Right lobe of liver (tissue), 6 donors: ENCODE measurements at regions of chr6 and their contacts with region 1.

Region 1: GRCh38 chr6:143112084-143112768 is 51.5 kb downstream of the AIG1 start:
- DNase-seq: no peak
- ATAC-seq: peak in 1 of 4 donors; percentile 26
- H3K4me3 ChIP-seq: no peak overlapping the region
- H3K27ac ChIP-seq: peak overlapping the region in 2 of 3 donors; percentile 76 to 77
- H3K4me1 ChIP-seq: peaks cover 0 to 25% (median 11%) of the 10 kb centered on the region in 4 donors
- H3K27me3 ChIP-seq: no peaks in the 10 kb centered on the region
- CTCF ChIP-seq: no peak
- POLR2A ChIP-seq: no peak

Region 2: GRCh38 chr6:143060354-143060805 is 51.8 kb before region 1 on chr6:
- intact Hi-C with region 1: loop called in 1 of 2 experiments (anchors 10 kb)
- DNase-seq: peak; percentile 88 to 92 (median 89)
- ATAC-seq: peak; percentile 75 to 89 (median 80)
- H3K4me3 ChIP-seq: peak overlapping the region; percentile 75 to 77 (median 75)
- H3K27ac ChIP-seq: peak overlapping the region; percentile 98 to 100 (median 98)
- H3K4me1 ChIP-seq: peaks cover 0 to 33% (median 9%) of the 10 kb centered on the region in 4 donors
- H3K27me3 ChIP-seq: no peaks in the 10 kb centered on the region
- CTCF ChIP-seq: peak in 3 of 4 donors; percentile 7 to 11 (median 8)
- POLR2A ChIP-seq: peak; percentile 69